Left colon (tissue), 2 donors: ENCODE measurements at regions of chr18 and their contacts with region 1.

Region 1: DNA sequence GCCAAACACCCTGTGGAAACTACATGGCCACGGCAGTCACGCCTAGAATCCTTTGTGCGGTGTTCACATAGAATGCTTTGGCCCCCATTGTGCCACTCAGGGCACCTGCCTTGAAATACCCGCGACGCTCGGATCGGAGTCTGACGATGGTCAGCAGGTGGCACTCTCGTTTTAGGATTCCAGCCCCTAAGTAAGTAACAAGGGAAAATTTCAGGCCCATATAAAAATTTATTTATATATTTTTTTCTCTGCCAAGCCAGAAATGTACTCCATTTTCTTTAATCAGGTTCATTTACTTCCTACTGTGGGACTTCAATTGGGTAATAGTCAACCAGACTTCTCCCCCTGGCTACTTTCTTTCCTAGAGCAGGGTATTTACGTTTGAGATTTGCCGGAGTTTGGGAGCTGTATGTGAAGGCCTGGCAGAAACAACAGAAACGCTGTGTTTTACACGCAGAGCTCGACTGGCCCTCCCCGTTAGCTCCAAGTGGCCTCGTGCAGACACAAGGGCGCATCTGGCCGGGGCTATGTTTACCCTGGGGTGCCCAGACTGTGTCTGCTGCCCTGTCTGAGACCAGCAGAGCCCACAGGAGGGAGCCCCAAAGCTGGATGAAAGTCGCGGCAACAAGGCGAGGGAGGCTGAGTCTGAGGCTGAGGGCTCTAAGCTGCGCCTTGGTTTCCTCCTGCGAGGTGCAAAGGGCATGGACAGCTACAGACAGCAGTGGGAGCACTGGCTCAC is 41.6 kb downstream of the LRRC30 start:
- DNase-seq: peak in 1 of 2 donors; percentile 30
- ATAC-seq: no peak

Region 2: GRCh38 chr18:6729247-6730091 is 543.0 kb before region 1 on chr18 and contains the start of gene ARHGAP28:
- intact Hi-C with region 1: no loop called
- DNase-seq: peak; percentile 51 to 87
- ATAC-seq: peak; percentile 94
- total RNA-seq, gene ARHGAP28: 2.1 to 6.5 TPM

Region 3: DNA sequence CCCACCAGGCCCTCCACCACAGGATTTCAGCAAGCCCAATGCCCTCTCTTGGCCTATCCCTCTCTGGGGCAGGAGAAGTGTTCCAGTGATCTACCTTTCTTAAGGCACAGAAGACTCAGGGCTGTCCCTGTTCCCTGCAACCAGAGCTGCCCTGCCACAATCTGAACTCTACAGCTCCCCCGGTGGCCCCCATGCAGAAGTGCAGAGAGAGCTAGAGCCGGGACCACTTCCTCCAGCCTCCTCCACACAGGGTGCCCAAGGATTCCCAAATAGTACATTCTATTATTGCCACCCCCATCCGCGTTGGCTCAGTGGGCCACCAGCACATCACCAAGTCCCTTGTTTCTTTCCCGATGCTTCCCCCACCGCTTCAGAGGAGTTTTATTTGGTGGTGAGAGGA is 179.9 kb after region 1 on chr18:
- intact Hi-C with region 1: loop called in 1 of 2 experiments (anchors 10 kb)
- DNase-seq: peak in 1 of 2 donors; percentile 9
- ATAC-seq: peak; percentile 45

Region 4: DNA sequence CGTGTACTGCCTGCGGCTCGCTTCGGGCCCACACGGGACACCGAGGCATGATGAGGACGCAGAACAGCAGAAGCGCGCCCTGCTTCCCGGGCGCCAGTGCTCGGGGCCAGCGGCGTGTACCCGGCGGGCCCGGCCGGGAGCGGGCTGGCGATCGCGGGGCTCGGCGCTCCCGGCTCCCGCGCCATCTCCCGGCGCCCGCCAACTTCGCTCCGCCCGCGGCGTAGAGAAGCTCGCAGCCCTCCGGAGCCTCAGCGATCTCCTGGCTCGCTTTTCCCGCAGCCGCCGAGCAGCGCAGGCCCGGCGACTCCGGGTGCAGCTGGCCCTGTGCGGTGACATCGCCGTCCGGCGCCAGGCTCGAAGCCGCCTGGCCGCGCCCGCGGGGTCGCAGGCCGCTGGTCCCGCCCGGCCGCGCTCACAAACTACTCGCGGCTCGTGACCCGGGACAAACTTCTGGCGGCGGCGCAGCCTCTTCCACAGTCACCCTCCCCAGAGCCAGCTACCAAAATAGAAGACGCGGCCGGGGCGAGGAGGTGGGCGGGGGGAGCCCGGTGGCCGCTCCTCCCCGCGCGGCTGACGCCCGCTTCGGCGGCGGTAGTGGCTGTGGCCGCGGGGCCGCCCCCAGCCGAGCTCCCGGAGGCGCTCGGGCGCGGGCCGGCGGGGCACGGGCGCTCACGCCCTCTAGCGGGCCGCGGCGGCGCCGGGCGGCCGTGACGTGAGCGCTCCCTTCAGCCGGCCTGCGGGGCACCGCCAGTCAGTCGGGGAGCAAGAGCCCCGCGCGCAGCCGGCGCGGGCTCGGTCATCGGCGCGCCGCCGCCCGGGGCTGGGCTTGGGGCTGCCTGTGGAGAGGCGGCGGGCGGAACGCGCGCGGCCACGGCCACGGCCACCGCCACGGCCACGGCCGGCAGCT is 294.3 kb after region 1 on chr18 and contains the start of gene PTPRM:
- intact Hi-C with region 1: loop called in 1 of 2 experiments (anchors 5 kb)
- DNase-seq: peak; percentile 65 to 74
- ATAC-seq: peak; percentile 93
- total RNA-seq, gene PTPRM: 12.3 to 15.9 TPM